ENCODE measurements at regions of chr19 and their contacts with region 1.

Region 1: GRCh38 chr19:45016388-45017319 is 15.4 kb downstream of the RELB start:
- DNase-seq: peak; percentile 83
- H3K4me3 ChIP-seq: no peak overlapping the region
- H3K27ac ChIP-seq: peak overlapping the region in 3 of 4 donors; percentile 25 to 34 (median 33)
- H3K4me1 ChIP-seq: peaks cover 0 to 11% (median 9%) of the 10 kb centered on the region in 4 donors
- H3K27me3 ChIP-seq: no peaks in the 10 kb centered on the region
- CTCF ChIP-seq: peak; percentile 53 to 60 (median 56)
- EP300 ChIP-seq: no peak
- POLR2A ChIP-seq: no peak

Region 2: DNA sequence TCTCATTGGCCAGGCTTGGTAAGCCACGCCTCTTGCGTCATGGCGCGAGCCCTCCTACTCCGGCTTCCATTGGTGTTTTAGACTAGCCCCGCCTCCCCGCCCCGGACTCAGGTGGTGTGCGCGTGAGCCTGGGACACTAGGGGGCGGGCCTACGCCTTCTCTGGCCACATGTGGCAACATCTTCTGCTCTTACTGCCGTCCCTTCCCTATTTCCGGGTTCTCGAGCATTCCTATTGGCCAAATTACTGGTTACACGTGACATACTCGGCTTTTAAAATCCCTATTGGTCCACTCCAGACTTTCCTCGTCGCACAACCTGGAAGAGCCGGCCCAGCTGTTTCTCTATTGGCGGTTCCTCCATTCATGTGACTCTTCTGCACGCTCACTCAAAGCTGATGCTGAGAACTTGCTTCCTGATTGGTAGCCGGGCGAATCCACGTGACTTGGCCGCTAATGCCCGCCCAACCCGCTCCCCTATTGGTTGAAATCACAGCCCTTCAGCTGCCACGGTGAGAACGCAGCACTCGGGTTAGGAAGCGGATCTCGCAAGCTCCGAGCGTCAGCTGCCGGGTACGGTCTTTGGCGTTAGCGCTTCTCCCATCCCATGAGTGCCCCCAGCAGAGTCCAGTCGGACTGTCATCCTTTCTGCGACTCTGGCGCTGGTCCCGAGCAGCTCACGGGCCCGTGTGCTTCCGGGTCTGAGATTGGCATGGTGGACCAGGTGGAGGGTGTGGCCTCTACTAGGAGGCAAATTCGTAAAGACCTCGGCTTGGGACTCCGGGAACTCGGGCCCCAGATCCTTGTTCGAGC is 161.8 kb after region 1 on chr19 and contains the start of gene BLOC1S3:
- intact Hi-C with region 1: loop called (anchors 5 kb)
- DNase-seq: peak; percentile 100
- H3K4me3 ChIP-seq: peak within 1 kb of the TSS; percentile 75 to 89 (median 86)
- H3K27ac ChIP-seq: peak within 1 kb of the TSS; percentile 94 to 98 (median 95)
- H3K4me1 ChIP-seq: peaks cover 0 to 38% (median 30%) of the 10 kb centered on the region in 4 donors
- H3K27me3 ChIP-seq: no peaks in the 10 kb centered on the region
- CTCF ChIP-seq: no peak
- EP300 ChIP-seq: peak in 1 of 4 donors; percentile 70
- POLR2A ChIP-seq: peak; percentile 82 to 83
- total RNA-seq, gene BLOC1S3: 6.1 to 10.9 (median 7.8) TPM

Region 3: GRCh38 chr19:45339629-45340028 is 323.0 kb after region 1 on chr19:
- intact Hi-C with region 1: loop called (anchors 2 kb)
- DNase-seq: no peak
- H3K4me3 ChIP-seq: no peak overlapping the region
- H3K27ac ChIP-seq: no peak overlapping the region
- H3K4me1 ChIP-seq: peaks cover 0 to 15% (median 10%) of the 10 kb centered on the region in 4 donors
- H3K27me3 ChIP-seq: peaks cover 18 to 40% (median 21%) of the 10 kb centered on the region in 3 donors
- CTCF ChIP-seq: no peak
- EP300 ChIP-seq: no peak
- POLR2A ChIP-seq: no peak

Measured in sigmoid colon (tissue), 7 donors.